ENCODE measurements at regions of chr3 and their contacts with region 1.

Region 1: GRCh38 chr3:16247276-16248061 is 17.3 kb downstream of the DPH3 start:
- DNase-seq: peak; percentile 75 to 84
- ATAC-seq: peak; percentile 49 to 69 (median 63)
- H3K4me3 ChIP-seq: no peak overlapping the region
- H3K27ac ChIP-seq: no peak overlapping the region
- H3K4me1 ChIP-seq: peaks cover 27% of the 10 kb centered on the region
- H3K27me3 ChIP-seq: no peaks in the 10 kb centered on the region
- CTCF ChIP-seq: peak; percentile 96

Region 2: DNA sequence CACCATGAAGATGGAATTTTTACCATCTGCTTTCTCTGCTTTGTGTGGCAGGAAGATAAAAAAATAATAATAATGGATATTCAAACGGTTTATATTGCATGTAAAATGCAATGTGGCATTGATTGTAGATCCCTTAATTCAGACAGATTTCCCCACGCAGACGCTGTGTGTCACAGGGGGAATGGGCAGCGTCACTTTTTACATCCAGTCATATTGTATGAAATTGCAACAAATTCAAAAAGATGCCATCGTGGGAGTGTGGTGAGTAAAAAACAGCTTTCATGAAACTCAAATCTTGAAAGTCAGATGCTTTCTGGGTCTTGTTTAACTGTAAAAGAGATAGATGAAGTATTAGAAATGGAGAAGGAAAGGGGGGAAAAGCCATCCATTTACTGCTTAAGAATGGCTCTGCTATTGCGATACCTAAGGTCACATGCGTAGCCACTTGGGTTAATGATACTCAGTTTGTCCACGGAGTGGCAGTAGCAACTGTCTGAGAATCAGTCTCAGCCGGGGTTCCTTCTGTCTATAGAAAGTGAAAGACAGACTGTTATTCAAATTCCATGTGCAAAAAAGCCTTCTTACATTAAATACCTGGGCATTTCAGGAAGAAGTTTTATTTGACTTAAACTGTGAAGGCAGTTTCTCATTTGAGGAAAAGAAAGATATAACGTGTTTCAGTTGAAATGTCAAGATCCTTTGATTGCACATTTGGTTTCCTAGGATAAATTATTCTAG is 617.4 kb before region 1 on chr3:
- intact Hi-C with region 1: loop called (anchors 5 to 10 kb)
- DNase-seq: no peak
- ATAC-seq: peak; percentile 80 to 90 (median 88)
- H3K4me3 ChIP-seq: peak overlapping the region; percentile 51
- H3K27ac ChIP-seq: peak overlapping the region; percentile 95
- H3K4me1 ChIP-seq: peaks cover 31% of the 10 kb centered on the region
- H3K27me3 ChIP-seq: no peaks in the 10 kb centered on the region
- CTCF ChIP-seq: peak; percentile 77

Region 3: DNA sequence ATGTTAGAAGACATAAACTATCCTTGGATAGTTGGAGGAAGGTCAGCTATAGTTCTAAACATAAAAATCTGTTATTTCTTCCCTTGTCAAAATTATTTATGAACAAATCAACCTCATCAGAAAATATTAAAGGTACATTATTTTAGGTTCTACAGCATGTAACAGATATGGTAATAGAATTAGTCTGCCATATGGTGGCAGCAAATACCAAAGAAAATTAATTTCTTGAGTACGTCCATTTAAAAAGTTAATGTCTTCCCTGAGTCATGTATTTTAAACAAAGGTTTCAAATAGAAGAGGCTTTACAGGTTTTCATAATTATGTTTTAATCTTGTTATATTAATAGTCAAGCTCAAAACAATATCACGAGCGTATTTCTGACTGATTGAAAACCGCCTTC is 431.8 kb before region 1 on chr3:
- intact Hi-C with region 1: loop called (anchors 2 to 10 kb)
- DNase-seq: no peak
- ATAC-seq: peak in 3 of 4 donors; percentile 70 to 86 (median 80)
- H3K4me3 ChIP-seq: no peak overlapping the region
- H3K27ac ChIP-seq: peak overlapping the region; percentile 36
- H3K4me1 ChIP-seq: peaks cover 21% of the 10 kb centered on the region
- H3K27me3 ChIP-seq: no peaks in the 10 kb centered on the region
- CTCF ChIP-seq: peak; percentile 52

Region 4: DNA sequence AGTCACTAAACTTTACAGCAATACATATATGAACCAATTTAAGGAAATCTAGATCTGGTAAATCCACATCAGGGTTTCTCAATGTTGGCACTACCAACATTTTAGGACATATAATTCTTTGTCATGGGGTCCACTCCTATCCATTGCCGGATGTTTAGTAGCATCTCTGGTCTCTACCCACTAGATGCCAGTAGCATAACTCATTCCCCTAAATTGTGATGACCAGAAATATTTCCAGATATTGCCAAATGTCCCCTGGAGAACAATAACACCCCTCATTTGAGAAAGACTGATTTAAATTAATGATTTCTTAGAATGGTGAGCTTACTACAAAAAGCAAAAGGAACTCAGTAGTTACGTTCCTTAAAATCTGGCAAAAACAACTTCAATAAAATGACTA is 426.6 kb before region 1 on chr3:
- intact Hi-C with region 1: loop called (anchors 2 to 10 kb)
- DNase-seq: no peak
- ATAC-seq: peak in 3 of 4 donors; percentile 42 to 60 (median 43)
- H3K4me3 ChIP-seq: no peak overlapping the region
- H3K27ac ChIP-seq: no peak overlapping the region
- H3K4me1 ChIP-seq: peaks cover 40% of the 10 kb centered on the region
- H3K27me3 ChIP-seq: no peaks in the 10 kb centered on the region
- CTCF ChIP-seq: no peak

Region 5: DNA sequence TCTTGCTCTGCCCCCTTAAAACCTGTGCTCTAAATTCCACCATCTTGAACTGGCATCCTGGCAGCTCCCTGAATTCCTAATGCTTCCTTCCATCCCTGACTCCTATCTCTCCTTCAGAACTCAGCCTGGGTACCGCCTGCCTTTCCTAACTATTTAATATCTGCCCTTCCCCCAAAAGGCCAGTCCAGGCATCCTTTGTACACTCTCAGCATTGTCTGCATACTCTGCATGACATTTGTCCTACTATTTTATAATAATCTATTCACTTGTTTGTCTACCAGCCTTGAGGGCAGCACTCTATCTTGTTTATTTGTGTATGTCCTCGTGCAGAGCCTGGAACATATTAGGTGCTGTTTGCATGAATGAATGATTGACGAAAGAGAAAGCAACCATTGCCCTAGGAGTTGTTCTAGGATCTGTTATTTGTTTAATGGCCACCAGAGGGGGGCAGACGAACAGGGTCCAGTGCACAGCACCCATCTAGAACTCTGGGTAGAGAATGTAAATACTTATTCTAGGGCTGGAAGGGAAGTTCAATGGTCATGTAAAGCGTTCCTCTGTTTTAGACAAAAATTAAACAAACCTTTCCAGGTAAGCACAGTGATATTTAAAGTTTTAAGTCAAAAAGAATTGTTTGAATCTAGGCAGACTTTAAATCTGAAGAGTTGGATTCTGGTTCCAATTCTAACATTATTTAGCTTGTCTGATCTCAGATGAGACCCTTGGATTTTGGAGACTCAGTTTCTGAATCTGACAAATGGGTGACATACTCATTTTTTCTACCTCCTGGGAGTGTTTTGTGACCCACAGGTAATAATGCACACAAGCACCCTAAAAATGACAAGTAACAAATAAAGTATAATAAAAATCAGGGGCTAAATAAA is 198.8 kb before region 1 on chr3:
- intact Hi-C with region 1: loop called (anchors 1 to 2 kb)
- DNase-seq: no peak
- ATAC-seq: peak; percentile 88 to 94 (median 94)
- H3K4me3 ChIP-seq: peak overlapping the region; percentile 43
- H3K27ac ChIP-seq: peak overlapping the region; percentile 12
- H3K4me1 ChIP-seq: peaks cover 28% of the 10 kb centered on the region
- H3K27me3 ChIP-seq: no peaks in the 10 kb centered on the region
- CTCF ChIP-seq: peak; percentile 89

Region 6: GRCh38 chr3:16190704-16191103 is 56.8 kb before region 1 on chr3:
- intact Hi-C with region 1: no loop called
- DNase-seq: no peak
- ATAC-seq: no peak
- H3K4me3 ChIP-seq: no peak overlapping the region
- H3K27ac ChIP-seq: no peak overlapping the region
- H3K4me1 ChIP-seq: no peaks in the 10 kb centered on the region
- H3K27me3 ChIP-seq: peaks cover 0 to 2% (median 0%) of the 10 kb centered on the region in 3 donors
- CTCF ChIP-seq: no peak

Region 7: GRCh38 chr3:16388850-16389441 is 141.5 kb after region 1 on chr3:
- intact Hi-C with region 1: no loop called
- DNase-seq: no peak
- ATAC-seq: no peak
- H3K4me3 ChIP-seq: no peak overlapping the region
- H3K27ac ChIP-seq: no peak overlapping the region
- H3K4me1 ChIP-seq: peaks cover 11% of the 10 kb centered on the region
- H3K27me3 ChIP-seq: no peaks in the 10 kb centered on the region
- CTCF ChIP-seq: no peak

Measured in psoas muscle (tissue), 8 donors.